Heart right ventricle (tissue), 16 donors: ENCODE measurements at regions of chr11 and their contacts with region 1.

Region 1: DNA sequence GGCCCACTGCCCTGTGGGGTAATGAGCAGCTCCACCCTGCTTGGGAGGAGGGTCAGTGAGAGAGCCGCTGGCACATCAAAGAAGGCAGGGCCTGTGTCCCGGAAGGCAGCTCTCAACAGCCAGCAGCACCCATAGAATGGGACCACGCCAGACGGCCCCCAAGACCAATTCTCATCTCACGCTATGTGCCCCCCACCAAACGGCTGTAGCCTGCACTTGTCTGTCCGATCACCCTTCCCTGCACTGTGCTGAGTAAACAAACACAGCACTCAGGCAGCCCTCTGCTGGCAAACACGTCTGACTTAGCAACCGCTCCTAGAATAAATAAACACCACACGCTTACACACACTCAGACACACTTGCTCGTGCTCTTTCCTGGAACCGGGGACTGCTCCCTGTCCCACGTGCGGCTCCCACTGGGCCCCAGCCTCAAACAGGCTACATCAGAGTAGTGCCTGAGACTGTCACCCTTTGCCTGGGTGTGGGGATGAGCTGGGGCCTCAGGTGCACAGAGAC is 53.2 kb upstream of the CDON start:
- DNase-seq: peak; percentile 64 to 75
- ATAC-seq: peak; percentile 63 to 81 (median 73)
- H3K4me3 ChIP-seq: no peak overlapping the region
- H3K27ac ChIP-seq: peak overlapping the region; percentile 23 to 86 (median 78)
- H3K4me1 ChIP-seq: peaks cover 25 to 59% (median 49%) of the 10 kb centered on the region in 9 donors
- H3K27me3 ChIP-seq: no peaks in the 10 kb centered on the region
- CTCF ChIP-seq: peak in 5 of 9 donors; percentile 7 to 48 (median 45)

Region 2: GRCh38 chr11:125376117-125376516 is 739.8 kb before region 1 on chr11:
- intact Hi-C with region 1: loop called in 1 of 10 experiments (anchors 10 kb)
- DNase-seq: peak; percentile 68 to 83
- ATAC-seq: peak; percentile 78 to 96 (median 93)
- H3K4me3 ChIP-seq: no peak overlapping the region
- H3K27ac ChIP-seq: peak overlapping the region in 9 of 10 donors; percentile 10 to 75 (median 57)
- H3K4me1 ChIP-seq: peaks cover 3 to 51% (median 37%) of the 10 kb centered on the region in 9 donors
- H3K27me3 ChIP-seq: peaks cover 0 to 12% (median 0%) of the 10 kb centered on the region in 7 donors
- CTCF ChIP-seq: no peak

Region 3: DNA sequence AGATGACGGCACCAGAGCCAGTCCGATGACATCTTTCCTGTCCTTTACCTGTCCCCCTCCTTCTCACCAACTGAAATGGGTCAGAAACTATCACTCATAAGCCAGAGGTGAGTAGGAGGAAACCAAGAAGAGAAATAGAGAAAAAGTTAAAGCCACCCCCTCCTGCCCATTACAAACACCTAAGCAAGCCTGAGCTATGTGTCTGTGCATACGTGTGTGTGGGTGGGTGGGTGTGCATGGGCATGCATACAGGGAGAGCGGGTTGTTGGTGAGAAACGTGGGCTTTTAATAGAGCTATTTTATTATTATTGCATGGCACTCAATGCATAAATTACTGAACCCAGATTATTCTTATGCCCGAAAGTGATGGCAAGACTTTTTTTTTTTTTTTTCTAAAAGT is 280.1 kb before region 1 on chr11:
- intact Hi-C with region 1: no loop called
- DNase-seq: no peak
- ATAC-seq: no peak
- H3K4me3 ChIP-seq: no peak overlapping the region
- H3K27ac ChIP-seq: no peak overlapping the region
- H3K4me1 ChIP-seq: no peaks in the 10 kb centered on the region
- H3K27me3 ChIP-seq: no peaks in the 10 kb centered on the region
- CTCF ChIP-seq: no peak

Region 4: DNA sequence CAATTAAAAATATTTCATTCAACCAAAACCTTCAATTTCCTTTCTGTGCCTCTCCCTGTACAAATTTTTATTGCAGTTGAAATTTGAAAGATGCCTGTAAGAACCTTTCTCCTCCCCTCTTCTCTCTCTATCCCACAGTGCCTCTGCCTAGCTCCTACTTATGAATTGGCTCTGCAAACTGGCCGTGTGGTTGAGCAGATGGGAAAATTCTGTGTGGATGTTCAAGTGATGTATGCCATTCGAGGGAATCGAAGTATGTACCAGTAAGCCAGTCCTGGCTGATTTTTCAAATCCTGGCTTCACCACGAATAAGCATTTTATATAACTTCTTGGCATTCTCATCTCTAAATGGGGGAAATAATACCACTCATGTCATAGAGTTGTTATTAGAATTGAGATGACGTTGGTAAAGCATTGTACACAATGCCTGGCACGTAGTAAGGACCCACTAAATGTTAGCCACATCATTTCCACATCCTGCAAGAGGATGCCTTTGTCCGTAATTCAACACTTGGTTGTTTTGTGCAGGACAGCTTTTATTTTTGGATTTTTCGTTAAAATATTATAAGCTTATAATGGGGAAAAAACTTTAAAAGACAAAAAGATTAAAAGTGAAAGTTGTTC is 205.5 kb before region 1 on chr11:
- intact Hi-C with region 1: no loop called
- DNase-seq: no peak
- ATAC-seq: no peak
- H3K4me3 ChIP-seq: no peak overlapping the region
- H3K27ac ChIP-seq: no peak overlapping the region
- H3K4me1 ChIP-seq: no peaks in the 10 kb centered on the region
- H3K27me3 ChIP-seq: peaks cover 0 to 34% (median 19%) of the 10 kb centered on the region in 7 donors
- CTCF ChIP-seq: no peak

Region 5: GRCh38 chr11:125941619-125942611 is 174.0 kb before region 1 on chr11:
- intact Hi-C with region 1: no loop called
- DNase-seq: peak; percentile 55 to 63
- ATAC-seq: peak; percentile 68 to 89 (median 78)
- H3K4me3 ChIP-seq: no peak overlapping the region
- H3K27ac ChIP-seq: peak overlapping the region in 8 of 10 donors; percentile 5 to 72 (median 54)
- H3K4me1 ChIP-seq: peaks cover 7 to 26% (median 17%) of the 10 kb centered on the region in 9 donors
- H3K27me3 ChIP-seq: peaks cover 0 to 4% (median 0%) of the 10 kb centered on the region in 7 donors
- CTCF ChIP-seq: peak; percentile 30 to 74 (median 70)

Region 6: GRCh38 chr11:126138636-126139035 is 22.8 kb after region 1 on chr11:
- intact Hi-C with region 1: loop called in 1 of 10 experiments (anchors 1 kb)
- DNase-seq: no peak
- ATAC-seq: peak in 3 of 8 donors; percentile 23 to 45 (median 27)
- H3K4me3 ChIP-seq: no peak overlapping the region
- H3K27ac ChIP-seq: peak overlapping the region in 3 of 10 donors; percentile 17 to 53 (median 32)
- H3K4me1 ChIP-seq: peaks cover 5 to 66% (median 40%) of the 10 kb centered on the region in 9 donors
- H3K27me3 ChIP-seq: peaks cover 0 to 10% (median 0%) of the 10 kb centered on the region in 7 donors
- CTCF ChIP-seq: no peak